Caco-2 (cell line): ENCODE measurements at regions of chr6 and their contacts with region 1.

Region 1: DNA sequence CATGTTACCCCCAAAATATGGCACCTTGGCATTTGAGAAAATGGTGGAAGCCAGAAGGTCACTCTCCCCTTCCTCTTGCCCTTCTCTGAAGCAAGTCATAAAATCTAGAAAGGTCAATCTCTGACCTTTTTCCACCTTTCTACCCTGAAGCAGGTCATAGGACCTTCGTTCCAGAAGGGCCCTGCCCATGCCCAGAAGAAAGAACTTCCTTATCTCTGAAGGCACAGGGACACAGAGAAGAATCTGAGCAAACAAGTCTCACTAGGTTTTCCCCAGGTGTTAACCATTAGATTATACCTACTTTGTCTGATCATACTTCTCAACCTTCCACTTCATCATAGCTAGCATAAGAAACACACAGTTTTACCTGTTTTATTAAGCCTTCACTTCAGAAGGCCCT is 42.5 kb downstream of the SMPDL3A start:
- DNase-seq: peak; percentile 36 to 47
- H3K4me3 ChIP-seq: no peak overlapping the region
- H3K4me3 Mint-ChIP-seq: no peak overlapping the region
- H3K27ac Mint-ChIP-seq: no peak overlapping the region
- H3K4me1 ChIP-seq: peaks cover 34% of the 10 kb centered on the region
- H3K4me1 Mint-ChIP-seq: peaks cover 19% of the 10 kb centered on the region
- H3K27me3 ChIP-seq: no peaks in the 10 kb centered on the region
- H3K27me3 Mint-ChIP-seq: no peaks in the 10 kb centered on the region
- CTCF ChIP-seq: no peak

Region 2: DNA sequence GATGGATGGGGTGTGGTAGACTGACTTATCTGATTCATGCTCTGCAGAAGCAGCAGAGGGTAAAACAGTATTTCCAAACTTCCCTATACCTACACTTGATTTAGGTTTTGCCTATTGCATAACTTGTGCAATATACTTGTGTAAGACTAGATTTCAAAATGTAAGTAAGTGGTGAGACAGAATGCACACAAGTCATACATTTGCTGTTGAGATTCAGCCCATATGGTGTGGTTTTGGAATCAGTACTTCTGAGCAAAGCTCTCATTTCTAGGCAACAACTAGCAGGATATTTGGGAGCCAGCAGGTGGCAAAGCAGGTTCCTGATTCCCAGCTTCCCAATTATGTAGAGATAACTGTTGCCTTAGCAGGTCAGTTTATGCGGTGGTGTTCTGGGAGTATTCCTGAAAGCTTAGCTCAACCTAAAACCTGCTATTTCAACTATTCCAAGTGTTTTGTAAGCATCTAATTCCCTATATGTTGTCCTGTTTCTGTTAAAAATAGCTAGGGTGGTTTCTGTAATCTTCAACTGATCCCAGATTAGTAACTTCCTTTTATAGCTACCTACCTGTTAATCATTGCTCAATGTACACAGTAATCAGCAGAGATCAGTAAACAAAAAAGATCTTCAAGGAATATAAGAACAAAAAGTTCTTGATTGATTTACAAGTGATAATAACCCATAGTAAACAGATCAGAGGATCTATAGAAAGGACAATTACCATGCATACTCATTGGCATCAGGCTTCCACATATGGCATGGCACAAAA is 60.5 kb before region 1 on chr6:
- CTCF ChIA-PET with region 1: interaction called, 8 read pairs
- POLR2A ChIA-PET with region 1: no interaction called
- intact Hi-C with region 1: loop called (anchors 1 kb)
- DNase-seq: peak; percentile 50 to 59
- H3K4me3 ChIP-seq: no peak overlapping the region
- H3K4me3 Mint-ChIP-seq: peak overlapping the region; percentile 42
- H3K27ac Mint-ChIP-seq: peak overlapping the region; percentile 66
- H3K4me1 ChIP-seq: peaks cover 52% of the 10 kb centered on the region
- H3K4me1 Mint-ChIP-seq: peaks cover 40% of the 10 kb centered on the region
- H3K27me3 ChIP-seq: no peaks in the 10 kb centered on the region
- H3K27me3 Mint-ChIP-seq: no peaks in the 10 kb centered on the region
- CTCF ChIP-seq: peak; percentile 24 to 49

Region 3: DNA sequence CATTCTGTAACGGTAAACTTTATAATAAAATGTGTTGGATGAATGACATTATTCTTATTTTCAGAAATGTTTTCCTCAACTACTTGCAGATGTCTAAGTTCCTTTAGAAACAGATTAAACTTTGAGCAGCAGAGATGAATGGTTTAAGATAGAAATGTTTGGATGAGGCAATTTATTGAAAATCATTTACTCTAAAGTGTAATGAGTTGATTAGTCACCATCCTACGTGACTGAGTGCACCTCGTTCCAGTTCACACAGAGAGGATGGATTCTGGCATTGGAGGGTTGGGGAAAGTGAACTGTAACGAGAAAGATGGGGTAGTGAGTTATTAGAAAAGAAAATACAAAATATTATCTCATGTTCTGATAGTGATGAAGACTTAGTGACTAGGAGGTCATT is 13.7 kb before region 1 on chr6:
- CTCF ChIA-PET with region 1: no interaction called
- POLR2A ChIA-PET with region 1: no interaction called
- intact Hi-C with region 1: loop called (anchors 2 kb)
- DNase-seq: no peak
- H3K4me3 ChIP-seq: no peak overlapping the region
- H3K4me3 Mint-ChIP-seq: no peak overlapping the region
- H3K27ac Mint-ChIP-seq: no peak overlapping the region
- H3K4me1 ChIP-seq: no peaks in the 10 kb centered on the region
- H3K4me1 Mint-ChIP-seq: peaks cover 4% of the 10 kb centered on the region
- H3K27me3 ChIP-seq: no peaks in the 10 kb centered on the region
- H3K27me3 Mint-ChIP-seq: no peaks in the 10 kb centered on the region
- CTCF ChIP-seq: no peak